Ascending aorta (tissue), 2 donors: ENCODE measurements at regions of chr7 and their contacts with region 1.

Region 1: DNA sequence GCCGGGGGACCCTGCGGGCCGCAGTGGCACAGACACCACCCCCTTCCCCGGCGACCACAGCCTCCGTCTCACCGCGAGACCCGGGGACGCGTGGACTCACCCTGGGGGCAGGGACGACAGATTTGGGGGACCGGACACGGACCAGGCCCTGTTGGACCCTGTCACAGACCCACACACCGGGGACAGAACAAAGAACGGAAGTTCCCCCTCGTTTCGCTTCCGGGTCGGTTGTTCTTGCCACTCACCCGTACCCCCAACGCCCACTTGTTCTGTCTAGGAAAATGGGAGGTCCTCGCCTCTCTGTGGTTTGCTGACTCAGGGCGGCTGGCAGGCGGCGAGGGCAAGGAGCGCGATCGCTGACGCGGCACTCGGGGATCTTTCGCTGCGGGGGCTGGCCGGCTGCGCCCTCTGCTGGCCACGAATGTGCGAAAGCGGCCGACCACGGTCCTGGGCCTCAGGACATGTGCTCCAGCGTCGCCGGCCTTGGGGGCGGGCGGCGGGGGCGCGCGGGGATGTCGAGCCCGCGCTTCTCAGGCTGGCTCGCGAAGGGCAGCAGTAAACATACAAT is at the start of gene ZNF3:
- DNase-seq: peak; percentile 93 to 99
- H3K4me3 ChIP-seq: peak within 1 kb of the TSS; percentile 87 to 97
- H3K27ac ChIP-seq: peak within 1 kb of the TSS; percentile 77 to 85
- H3K4me1 ChIP-seq: peaks cover 0 to 26% of the 10 kb centered on the region in 2 donors
- H3K27me3 ChIP-seq: no peaks in the 10 kb centered on the region
- CTCF ChIP-seq: peak; percentile 93 to 97 (median 96)
- total RNA-seq, gene ZNF3: 6.9 TPM

Region 2: GRCh38 chr7:99918959-99919813 is 162.4 kb before region 1 on chr7 and contains the start of gene TRIM4:
- intact Hi-C with region 1: loop called (anchors 5 kb)
- DNase-seq: peak; percentile 79 to 96
- H3K4me3 ChIP-seq: peak within 1 kb of the TSS; percentile 87 to 94
- H3K27ac ChIP-seq: peak within 1 kb of the TSS; percentile 93 to 96
- H3K4me1 ChIP-seq: peaks cover 19 to 26% of the 10 kb centered on the region in 2 donors
- H3K27me3 ChIP-seq: no peaks in the 10 kb centered on the region
- CTCF ChIP-seq: peak in 2 of 3 experiments; percentile 28 to 40
- total RNA-seq, gene TRIM4: 12.7 TPM

Region 3: DNA sequence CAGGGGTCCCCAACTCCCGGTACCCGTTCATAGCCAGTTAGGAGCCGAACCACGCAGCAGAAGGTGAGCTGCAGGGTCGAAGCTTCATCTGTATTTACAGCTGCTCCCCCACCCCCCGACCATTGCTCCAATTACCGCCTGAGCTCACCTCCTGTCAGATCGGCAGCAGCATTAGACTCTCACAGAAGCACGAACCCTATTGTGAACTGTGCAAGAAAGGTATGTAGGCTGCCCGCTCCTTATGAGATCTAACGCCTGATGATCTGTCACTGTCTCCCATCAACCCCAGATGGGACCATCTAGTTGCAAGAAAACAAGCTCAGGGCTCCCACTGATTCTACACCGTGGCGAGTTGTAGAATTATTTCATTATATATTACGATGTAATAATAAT is 91.2 kb before region 1 on chr7:
- intact Hi-C with region 1: loop called (anchors 5 kb)
- DNase-seq: no peak
- H3K4me3 ChIP-seq: peak overlapping the region in 1 of 2 donors; percentile 53
- H3K27ac ChIP-seq: no peak overlapping the region
- H3K4me1 ChIP-seq: no peaks in the 10 kb centered on the region
- H3K27me3 ChIP-seq: no peaks in the 10 kb centered on the region
- CTCF ChIP-seq: no peak

Region 4: DNA sequence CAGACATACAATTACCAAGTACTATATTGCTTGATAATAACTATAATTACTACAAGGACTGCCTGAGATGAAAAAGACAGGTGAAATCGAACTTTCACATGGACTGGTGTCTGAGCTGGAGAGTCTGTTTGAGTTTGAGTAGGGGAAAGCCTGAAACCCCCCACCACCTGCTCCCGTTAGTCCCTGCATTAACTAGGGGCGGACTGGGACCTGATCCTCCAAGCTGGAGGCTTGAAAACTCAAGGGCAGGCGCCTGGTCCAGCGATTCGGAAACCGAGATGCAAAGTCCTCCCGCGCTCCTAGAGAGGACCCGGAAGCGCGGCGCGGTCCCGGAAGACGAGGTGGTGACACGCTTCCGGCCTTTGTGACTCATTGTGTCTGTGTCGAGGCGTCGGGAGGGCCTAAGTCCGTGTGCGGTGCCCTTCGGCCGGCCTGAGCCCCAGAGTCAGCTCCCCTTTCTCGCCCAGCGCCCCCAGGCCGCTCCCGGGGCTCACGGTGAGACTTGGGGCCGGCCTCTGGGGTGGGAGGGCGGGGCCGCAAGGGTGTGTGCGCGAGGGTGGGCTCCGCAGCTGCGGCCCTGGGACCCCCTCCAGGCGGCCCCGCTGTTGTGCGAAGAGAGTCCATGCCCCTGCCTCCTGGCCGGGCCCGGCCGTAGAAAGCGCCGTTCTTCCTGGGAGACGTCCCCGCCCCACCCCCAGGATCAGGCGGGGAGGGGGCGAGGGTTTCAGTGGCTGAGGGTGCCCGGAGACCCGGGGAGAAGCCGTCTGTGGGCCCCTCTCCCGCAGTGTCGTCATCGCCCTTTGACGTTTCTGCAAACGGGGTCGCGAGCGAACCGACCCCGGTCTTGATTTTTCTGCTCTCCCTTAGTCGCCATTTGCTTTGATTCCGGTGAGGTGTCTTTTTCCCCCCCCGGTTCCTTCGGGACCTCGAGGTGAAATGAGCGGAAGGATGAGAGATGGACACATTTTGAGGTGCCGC is 66.1 kb before region 1 on chr7 and contains the start of gene ZKSCAN1:
- intact Hi-C with region 1: loop called (anchors 1 kb)
- DNase-seq: peak; percentile 55 to 93
- H3K4me3 ChIP-seq: peak within 1 kb of the TSS; percentile 94 to 96
- H3K27ac ChIP-seq: peak within 1 kb of the TSS; percentile 97 to 98
- H3K4me1 ChIP-seq: peaks cover 0 to 16% of the 10 kb centered on the region in 2 donors
- H3K27me3 ChIP-seq: no peaks in the 10 kb centered on the region
- CTCF ChIP-seq: no peak
- total RNA-seq, gene ZKSCAN1: 19.9 TPM

Region 5: GRCh38 chr7:100049441-100050311 is 31.9 kb before region 1 on chr7 and contains the start of gene ZSCAN21:
- intact Hi-C with region 1: loop called (anchors 1 kb)
- DNase-seq: peak; percentile 57 to 93
- H3K4me3 ChIP-seq: peak within 1 kb of the TSS; percentile 65 to 88
- H3K27ac ChIP-seq: peak within 1 kb of the TSS; percentile 87 to 97
- H3K4me1 ChIP-seq: peaks cover 5 to 9% of the 10 kb centered on the region in 2 donors
- H3K27me3 ChIP-seq: no peaks in the 10 kb centered on the region
- CTCF ChIP-seq: peak in 2 of 3 experiments; percentile 23 to 29
- total RNA-seq, gene ZSCAN21: 58.5 TPM

Region 6: GRCh38 chr7:100101016-100101862 is 19.6 kb after region 1 on chr7 and contains the starts of genes AP4M1 and MCM7:
- intact Hi-C with region 1: loop called (anchors 1 kb)
- DNase-seq: peak; percentile 93 to 99
- H3K4me3 ChIP-seq: peak within 1 kb of the TSS; percentile 87
- H3K27ac ChIP-seq: peak within 1 kb of the TSS; percentile 93 to 95
- H3K4me1 ChIP-seq: peaks cover 4 to 15% of the 10 kb centered on the region in 2 donors
- H3K27me3 ChIP-seq: no peaks in the 10 kb centered on the region
- CTCF ChIP-seq: no peak
- total RNA-seq, gene AP4M1: 29.6 TPM
- total RNA-seq, gene MCM7: 52.2 TPM

Region 7: GRCh38 chr7:100208911-100209408 is 127.3 kb after region 1 on chr7:
- intact Hi-C with region 1: no loop called
- DNase-seq: no peak
- H3K4me3 ChIP-seq: no peak overlapping the region
- H3K27ac ChIP-seq: no peak overlapping the region
- H3K4me1 ChIP-seq: no peaks in the 10 kb centered on the region
- H3K27me3 ChIP-seq: no peaks in the 10 kb centered on the region
- CTCF ChIP-seq: no peak